H1 (cell line): ENCODE measurements at regions of chr5 and their contacts with region 1.

Region 1: DNA sequence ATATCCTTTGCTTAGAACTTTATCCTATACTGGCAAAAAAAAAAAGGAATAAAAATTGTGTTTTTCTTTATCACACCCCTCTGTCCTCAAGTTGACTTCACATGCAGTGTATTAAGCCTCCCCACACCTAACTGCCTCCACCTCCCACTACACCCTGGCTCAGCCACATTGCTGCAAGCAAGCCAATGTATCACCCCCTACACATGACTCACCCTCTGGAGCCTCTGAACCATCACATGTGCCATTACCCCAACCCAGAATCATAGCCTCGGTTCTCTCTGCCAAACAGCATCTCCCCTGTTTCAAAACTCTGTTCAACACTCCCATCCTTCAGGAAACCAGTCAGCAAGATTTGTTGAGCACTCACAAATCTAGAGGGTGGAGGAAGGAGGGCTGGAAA is 209.0 kb downstream of the CWC27 start:
- DNase-seq: no peak
- H3K4me3 ChIP-seq: no peak overlapping the region
- H3K27ac ChIP-seq: no peak overlapping the region
- H3K4me1 ChIP-seq: no peaks in the 10 kb centered on the region
- H3K27me3 ChIP-seq: no peaks in the 10 kb centered on the region
- CTCF ChIP-seq: no peak
- EP300 ChIP-seq: no peak
- POLR2A ChIP-seq: no peak
- RAD21 ChIP-seq: no peak

Region 2: GRCh38 chr5:64958757-64959391 is 18.9 kb before region 1 on chr5:
- CTCF ChIA-PET with region 1: interaction called, 10 read pairs
- POLR2A ChIA-PET with region 1: no interaction called
- DNase-seq: no peak
- H3K4me3 ChIP-seq: no peak overlapping the region
- H3K27ac ChIP-seq: no peak overlapping the region
- H3K4me1 ChIP-seq: no peaks in the 10 kb centered on the region
- H3K27me3 ChIP-seq: no peaks in the 10 kb centered on the region
- CTCF ChIP-seq: peak in 1 of 3 experiments; percentile 20; a peak in 2 of 4 replicates
- EP300 ChIP-seq: no peak
- POLR2A ChIP-seq: no peak
- RAD21 ChIP-seq: peak in 1 of 2 experiments; percentile 36; a peak in 2 of 4 replicates

Region 3: GRCh38 chr5:65021527-65022226 is 43.9 kb after region 1 on chr5:
- CTCF ChIA-PET with region 1: no interaction called
- POLR2A ChIA-PET with region 1: no interaction called
- DNase-seq: no peak
- H3K4me3 ChIP-seq: no peak overlapping the region
- H3K27ac ChIP-seq: no peak overlapping the region
- H3K4me1 ChIP-seq: no peaks in the 10 kb centered on the region
- H3K27me3 ChIP-seq: no peaks in the 10 kb centered on the region
- CTCF ChIP-seq: no peak
- EP300 ChIP-seq: no peak
- POLR2A ChIP-seq: no peak
- RAD21 ChIP-seq: no peak